IMR-90 (cell line): ENCODE measurements at regions of chr7 and their contacts with region 1.

Region 1: GRCh38 chr7:19982841-19983835 is 209.7 kb upstream of the TMEM196 start:
- DNase-seq: peak; percentile 77
- ATAC-seq: peak; percentile 81
- H3K4me3 ChIP-seq: no peak overlapping the region
- H3K27ac ChIP-seq: no peak overlapping the region
- H3K4me1 ChIP-seq: no peaks in the 10 kb centered on the region
- H3K27me3 ChIP-seq: no peaks in the 10 kb centered on the region
- CTCF ChIP-seq: peak; percentile 59
- POLR2A ChIP-seq: no peak
- RAD21 ChIP-seq: peak; percentile 76

Region 2: DNA sequence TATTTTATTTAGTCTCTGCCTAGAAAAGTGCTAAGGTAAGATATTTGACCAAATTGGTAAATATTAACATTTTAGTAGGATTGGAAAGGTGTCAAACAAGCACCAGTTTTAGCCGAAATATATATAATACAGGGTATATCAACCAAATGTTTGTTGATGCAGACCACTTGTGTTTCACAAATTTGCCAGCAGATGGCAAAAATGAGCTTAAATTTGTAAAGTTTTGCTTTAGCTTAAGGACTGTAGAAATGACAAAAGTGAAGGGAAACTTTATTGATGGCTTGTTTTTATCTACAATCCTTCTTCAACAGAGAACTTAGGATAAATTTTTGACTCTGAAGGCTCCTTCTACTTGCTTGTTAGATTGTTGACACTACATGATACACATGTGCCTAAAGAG is 269.5 kb before region 1 on chr7:
- CTCF ChIA-PET with region 1: no interaction called
- POLR2A ChIA-PET with region 1: no interaction called
- dilution Hi-C with region 1: no loop called
- in situ Hi-C with region 1: no loop called
- intact Hi-C with region 1: loop called (anchors 5 kb)
- DNase-seq: peak; percentile 45
- ATAC-seq: peak; percentile 35; the same call in 1 of the 2 replicates
- H3K4me3 ChIP-seq: no peak overlapping the region
- H3K27ac ChIP-seq: no peak overlapping the region
- H3K4me1 ChIP-seq: no peaks in the 10 kb centered on the region
- H3K27me3 ChIP-seq: no peaks in the 10 kb centered on the region
- CTCF ChIP-seq: peak; percentile 58
- POLR2A ChIP-seq: no peak
- RAD21 ChIP-seq: peak; percentile 48

Region 3: GRCh38 chr7:19869979-19870378 is 113.2 kb before region 1 on chr7:
- CTCF ChIA-PET with region 1: no interaction called
- POLR2A ChIA-PET with region 1: no interaction called
- dilution Hi-C with region 1: no loop called
- in situ Hi-C with region 1: no loop called
- intact Hi-C with region 1: no loop called
- DNase-seq: no peak
- ATAC-seq: no peak
- H3K4me3 ChIP-seq: no peak overlapping the region
- H3K27ac ChIP-seq: no peak overlapping the region
- H3K4me1 ChIP-seq: no peaks in the 10 kb centered on the region
- H3K27me3 ChIP-seq: no peaks in the 10 kb centered on the region
- CTCF ChIP-seq: no peak
- POLR2A ChIP-seq: no peak
- RAD21 ChIP-seq: no peak

Region 4: GRCh38 chr7:20172736-20173334 is 189.7 kb after region 1 on chr7:
- CTCF ChIA-PET with region 1: no interaction called
- POLR2A ChIA-PET with region 1: no interaction called
- dilution Hi-C with region 1: no loop called
- in situ Hi-C with region 1: no loop called
- intact Hi-C with region 1: loop called (anchors 2 kb)
- DNase-seq: peak; percentile 40
- ATAC-seq: peak; percentile 63; the same call in 1 of the 2 replicates
- H3K4me3 ChIP-seq: no peak overlapping the region
- H3K27ac ChIP-seq: no peak overlapping the region
- H3K4me1 ChIP-seq: no peaks in the 10 kb centered on the region
- H3K27me3 ChIP-seq: no peaks in the 10 kb centered on the region
- CTCF ChIP-seq: peak; percentile 37
- POLR2A ChIP-seq: no peak
- RAD21 ChIP-seq: peak; percentile 36; the same call in 1 of the 2 replicates

Region 5: GRCh38 chr7:20310963-20311742 is 328.0 kb after region 1 on chr7:
- CTCF ChIA-PET with region 1: no interaction called
- POLR2A ChIA-PET with region 1: no interaction called
- dilution Hi-C with region 1: no loop called
- in situ Hi-C with region 1: loop called (anchors 10 kb)
- intact Hi-C with region 1: loop called (anchors 1 kb)
- DNase-seq: peak; percentile 67
- ATAC-seq: peak; percentile 61
- H3K4me3 ChIP-seq: no peak overlapping the region
- H3K27ac ChIP-seq: no peak overlapping the region; the same call in 1 of the 2 replicates
- H3K4me1 ChIP-seq: peaks cover 3% of the 10 kb centered on the region
- H3K27me3 ChIP-seq: no peaks in the 10 kb centered on the region
- CTCF ChIP-seq: peak; percentile 58
- POLR2A ChIP-seq: no peak
- RAD21 ChIP-seq: peak; percentile 73

Region 6: GRCh38 chr7:20330240-20330927 is 347.2 kb after region 1 on chr7 and contains the start of gene ITGB8:
- CTCF ChIA-PET with region 1: no interaction called
- POLR2A ChIA-PET with region 1: no interaction called
- dilution Hi-C with region 1: no loop called
- in situ Hi-C with region 1: no loop called
- intact Hi-C with region 1: loop called (anchors 1 kb)
- DNase-seq: peak; percentile 94
- ATAC-seq: peak; percentile 84
- H3K4me3 ChIP-seq: peak within 1 kb of the TSS; percentile 51
- H3K27ac ChIP-seq: peak within 1 kb of the TSS; percentile 82
- H3K4me1 ChIP-seq: peaks cover 2% of the 10 kb centered on the region; the same call in 1 of the 2 replicates
- H3K27me3 ChIP-seq: no peaks in the 10 kb centered on the region
- CTCF ChIP-seq: no peak
- POLR2A ChIP-seq: peak; percentile 48; the same call in 1 of the 2 replicates
- RAD21 ChIP-seq: no peak
- total RNA-seq, gene ITGB8: 10.2 and 10.8 TPM in 2 replicates

Region 7: DNA sequence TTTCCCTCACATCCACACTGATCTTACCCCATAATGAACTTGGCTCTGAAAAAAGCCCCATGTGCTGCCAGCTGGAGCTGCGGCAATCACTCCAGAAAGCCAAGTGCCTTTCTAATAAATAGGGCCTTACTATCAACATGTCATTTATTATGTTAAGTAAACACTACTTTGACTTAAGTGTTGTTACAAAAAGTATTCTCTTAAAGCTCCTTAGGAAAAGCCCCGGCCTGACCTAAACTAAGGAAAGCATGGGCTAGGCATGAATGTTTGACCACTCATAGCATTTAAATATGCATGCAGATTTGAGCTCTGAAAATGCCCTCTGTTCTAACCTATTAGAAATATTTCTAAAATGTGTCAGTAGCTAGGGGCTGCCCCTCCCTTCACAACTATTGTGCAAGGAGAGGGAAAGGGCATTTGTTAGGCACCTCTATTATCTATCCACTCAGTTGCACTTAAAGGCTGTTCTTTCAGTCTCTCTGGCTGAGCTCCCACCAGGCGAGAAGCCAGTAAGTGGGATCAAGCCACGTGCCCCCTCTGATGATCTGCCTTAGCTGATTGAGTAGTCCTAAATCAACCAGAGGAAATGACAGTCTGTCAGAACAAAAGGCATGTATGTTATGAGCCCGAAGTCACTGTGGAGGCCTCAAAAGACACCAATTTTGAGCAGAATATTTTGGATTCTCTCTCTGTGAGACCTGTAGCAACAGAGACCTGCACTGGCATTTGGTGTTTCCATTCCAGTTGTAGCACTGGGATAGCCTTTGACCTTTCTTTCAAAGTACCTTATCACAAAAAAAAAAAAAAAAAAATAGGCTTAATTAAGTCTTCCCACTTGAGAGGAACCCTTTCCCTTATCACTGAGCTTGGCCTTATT is 424.7 kb after region 1 on chr7:
- CTCF ChIA-PET with region 1: no interaction called
- POLR2A ChIA-PET with region 1: no interaction called
- dilution Hi-C with region 1: no loop called
- in situ Hi-C with region 1: no loop called
- intact Hi-C with region 1: loop called (anchors 10 kb)
- DNase-seq: peak; percentile 43
- ATAC-seq: peak; percentile 86
- H3K4me3 ChIP-seq: no peak overlapping the region
- H3K27ac ChIP-seq: peak overlapping the region; percentile 78; the same call in 1 of the 2 replicates
- H3K4me1 ChIP-seq: peaks cover 7% of the 10 kb centered on the region; the same call in 1 of the 2 replicates
- H3K27me3 ChIP-seq: no peaks in the 10 kb centered on the region
- CTCF ChIP-seq: no peak
- POLR2A ChIP-seq: no peak
- RAD21 ChIP-seq: no peak

Region 8: DNA sequence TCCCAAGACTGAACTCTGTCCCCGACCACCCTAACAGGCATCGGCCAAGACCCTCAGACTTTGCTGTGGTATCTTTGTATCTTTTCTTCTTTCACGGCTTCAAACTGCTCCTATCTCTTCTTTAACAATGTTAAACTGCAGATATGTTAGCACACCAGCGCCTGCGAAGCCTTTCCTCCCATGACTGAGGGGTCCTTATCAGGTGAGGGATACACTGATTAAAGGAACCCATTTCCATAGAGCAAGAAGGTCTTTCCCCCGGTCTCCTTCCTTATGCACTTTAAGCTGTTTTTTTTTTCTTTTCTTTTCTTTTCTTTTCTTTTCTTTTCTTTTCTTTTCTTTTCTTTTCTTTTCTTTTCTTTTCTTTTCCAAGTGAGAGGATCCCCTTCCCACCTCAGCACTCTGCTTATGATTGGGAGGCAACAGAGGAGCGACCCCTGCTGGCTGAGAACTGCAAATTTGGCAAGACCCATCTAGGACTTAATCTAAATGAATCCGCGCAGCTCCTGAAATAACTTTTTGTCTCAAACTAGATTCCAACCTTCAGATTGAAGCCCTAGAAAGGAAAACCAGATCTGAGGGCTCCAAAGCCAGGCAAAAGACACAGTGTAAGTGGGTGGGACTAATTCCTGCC is 457.5 kb after region 1 on chr7:
- CTCF ChIA-PET with region 1: no interaction called
- POLR2A ChIA-PET with region 1: no interaction called
- dilution Hi-C with region 1: no loop called
- in situ Hi-C with region 1: no loop called
- intact Hi-C with region 1: loop called (anchors 2 kb)
- DNase-seq: peak; percentile 62
- ATAC-seq: peak; percentile 37; the same call in 1 of the 2 replicates
- H3K4me3 ChIP-seq: no peak overlapping the region
- H3K27ac ChIP-seq: no peak overlapping the region
- H3K4me1 ChIP-seq: no peaks in the 10 kb centered on the region; the same call in 1 of the 2 replicates
- H3K27me3 ChIP-seq: no peaks in the 10 kb centered on the region; the same call in 1 of the 2 replicates
- CTCF ChIP-seq: peak; percentile 65
- POLR2A ChIP-seq: no peak
- RAD21 ChIP-seq: peak; percentile 59